ENCODE measurements at regions of chr4 and their contacts with region 1.

Region 1: GRCh38 chr4:139301113-139301820 is at the start of gene NAA15:
- DNase-seq: peak; percentile 93 to 99 (median 98)
- ATAC-seq: peak; percentile 90 to 91
- H3K4me3 Mint-ChIP-seq: peak within 1 kb of the TSS; percentile 96 to 100 (median 99)
- H3K27ac Mint-ChIP-seq: peak within 1 kb of the TSS; percentile 98 to 100 (median 99)
- H3K4me1 Mint-ChIP-seq: peaks cover 14 to 71% (median 50%) of the 10 kb centered on the region in 4 donors
- H3K27me3 Mint-ChIP-seq: no peaks in the 10 kb centered on the region
- polyA plus RNA-seq, gene NAA15: 32.1 to 41.8 (median 36.1) TPM

Region 2: DNA sequence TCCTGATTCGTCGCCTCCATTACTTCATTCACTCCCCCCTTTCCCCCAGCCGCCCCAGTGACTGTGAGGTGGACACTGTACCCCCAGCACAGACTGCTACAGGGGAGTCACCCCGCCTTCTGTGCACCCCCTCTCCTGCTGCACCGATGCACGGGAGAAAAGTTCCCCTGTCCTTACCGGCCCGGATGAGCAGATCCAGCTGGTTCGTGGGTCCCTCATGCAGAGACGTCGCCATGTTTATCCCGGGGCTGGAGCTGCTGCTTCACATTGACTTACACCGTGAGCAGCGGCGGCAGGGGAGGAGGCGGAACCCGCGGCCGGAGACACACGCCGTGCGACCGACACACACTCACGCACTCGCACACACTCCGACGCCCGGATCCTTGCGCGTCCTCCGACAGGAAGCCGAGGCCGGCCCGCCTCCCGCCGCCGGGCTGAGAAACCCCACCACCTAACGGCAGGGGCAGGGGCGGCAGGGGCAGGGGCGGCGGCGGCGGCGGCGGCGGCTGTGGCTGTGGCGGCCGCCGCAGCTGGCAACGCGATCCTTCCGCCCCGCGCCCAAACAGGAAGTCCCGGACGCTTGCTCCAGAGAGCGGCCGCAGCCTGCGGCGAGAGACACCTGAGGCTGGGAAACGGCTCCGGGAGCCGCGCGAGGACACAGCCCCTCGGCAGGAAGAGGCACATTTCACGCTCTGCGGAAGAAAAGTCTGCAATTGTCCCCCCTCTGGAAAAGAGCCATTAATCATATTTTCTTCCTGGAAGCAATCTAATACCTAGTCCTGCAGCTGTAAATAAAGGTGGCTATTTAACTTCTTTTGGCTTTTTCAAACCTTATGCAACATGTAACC is 217.1 kb before region 1 on chr4:
- POLR2A ChIA-PET with region 1: interaction called, 41 read pairs
- DNase-seq: peak; percentile 67 to 91 (median 79)
- ATAC-seq: peak; percentile 50 to 57
- H3K4me3 Mint-ChIP-seq: peak overlapping the region; percentile 81 to 100 (median 98)
- H3K27ac Mint-ChIP-seq: peak overlapping the region; percentile 95 to 100 (median 97)
- H3K4me1 Mint-ChIP-seq: peaks cover 11 to 50% (median 33%) of the 10 kb centered on the region in 4 donors
- H3K27me3 Mint-ChIP-seq: no peaks in the 10 kb centered on the region

Region 3: GRCh38 chr4:139177868-139178611 is 123.2 kb before region 1 on chr4:
- POLR2A ChIA-PET with region 1: interaction called, 18 read pairs
- DNase-seq: peak; percentile 81 to 93 (median 85)
- ATAC-seq: peak; percentile 72 to 75
- H3K4me3 Mint-ChIP-seq: peak overlapping the region; percentile 85 to 94 (median 90)
- H3K27ac Mint-ChIP-seq: peak overlapping the region; percentile 43 to 96 (median 90)
- H3K4me1 Mint-ChIP-seq: peaks cover 2 to 18% (median 14%) of the 10 kb centered on the region in 4 donors
- H3K27me3 Mint-ChIP-seq: no peaks in the 10 kb centered on the region

Region 4: DNA sequence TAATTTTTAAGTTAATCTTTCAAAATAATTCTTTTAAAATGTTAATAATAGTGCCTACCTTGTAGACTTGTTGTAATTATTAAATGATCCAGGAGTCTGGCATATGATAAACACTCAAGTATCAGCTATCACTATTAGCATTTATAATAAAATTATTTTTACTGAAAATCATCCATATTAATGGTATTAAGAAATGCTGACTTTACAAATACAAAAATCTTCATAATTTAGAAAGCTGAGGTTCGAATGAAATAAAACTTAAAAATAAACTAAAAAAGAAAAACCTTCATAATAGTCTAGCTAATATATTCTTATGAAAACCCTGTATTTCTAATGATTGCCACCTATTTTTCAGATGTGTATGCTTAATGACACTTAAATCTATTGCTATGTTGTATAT is 26.5 kb before region 1 on chr4:
- POLR2A ChIA-PET with region 1: no interaction called
- DNase-seq: no peak
- ATAC-seq: no peak
- H3K4me3 Mint-ChIP-seq: no peak overlapping the region
- H3K27ac Mint-ChIP-seq: no peak overlapping the region
- H3K4me1 Mint-ChIP-seq: peaks cover 8 to 15% (median 14%) of the 10 kb centered on the region in 4 donors
- H3K27me3 Mint-ChIP-seq: peaks cover 15 to 34% (median 30%) of the 10 kb centered on the region in 5 donors

Region 5: DNA sequence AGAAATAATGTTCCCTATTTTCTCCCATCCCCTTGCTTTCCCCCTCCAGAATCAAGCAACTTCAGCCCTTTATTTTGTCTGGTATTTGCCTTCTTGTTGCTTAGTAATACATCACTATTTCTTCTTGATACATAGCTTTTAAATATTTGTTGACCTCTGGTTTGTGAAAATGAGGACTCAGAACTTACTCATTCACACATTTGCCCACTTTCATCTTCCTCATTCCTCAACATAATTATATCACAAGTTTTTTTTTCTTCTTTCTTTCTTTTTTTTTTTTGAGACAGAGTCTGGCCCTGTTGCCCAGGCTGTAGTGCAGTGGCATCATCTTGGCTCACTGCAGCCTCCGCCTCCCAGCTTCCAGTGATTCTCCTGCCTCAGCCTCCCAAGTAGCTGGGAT is 29.9 kb after region 1 on chr4:
- POLR2A ChIA-PET with region 1: no interaction called
- DNase-seq: no peak
- ATAC-seq: no peak
- H3K4me3 Mint-ChIP-seq: peak overlapping the region in 1 of 10 donors; percentile 57
- H3K27ac Mint-ChIP-seq: peak overlapping the region in 4 of 10 donors; percentile 11 to 60 (median 49)
- H3K4me1 Mint-ChIP-seq: peaks cover 11 to 37% (median 27%) of the 10 kb centered on the region in 4 donors
- H3K27me3 Mint-ChIP-seq: no peaks in the 10 kb centered on the region